Activated B cell treated with CpG ODN at 0.5 μM for 24 hours (primary cell): ENCODE measurements at regions of chr7 and their contacts with region 1.

Region 1: DNA sequence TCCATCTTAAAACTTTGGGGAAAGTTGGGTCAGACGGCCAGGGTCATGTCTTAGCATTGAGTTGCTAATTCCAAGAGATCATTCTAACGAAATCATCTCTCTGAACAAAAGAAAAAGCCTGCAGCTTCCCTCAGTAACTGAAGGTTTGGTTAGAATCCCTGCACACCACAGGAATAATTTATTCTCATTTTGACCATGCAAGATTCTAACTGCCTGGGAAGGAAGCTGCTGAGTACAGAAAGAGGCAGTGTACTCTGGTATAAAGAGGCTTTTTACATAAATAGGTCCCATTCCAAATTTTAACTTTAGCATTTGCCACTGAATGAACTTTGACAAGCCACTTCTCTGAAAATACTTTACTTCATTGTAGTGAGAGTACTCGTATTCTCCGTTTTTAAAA is 76.9 kb upstream of the RSBN1L start:
- DNase-seq: no peak
- ATAC-seq: no peak
- H3K4me3 Mint-ChIP-seq: no peak overlapping the region
- H3K27ac Mint-ChIP-seq: no peak overlapping the region
- H3K4me1 Mint-ChIP-seq: no peaks in the 10 kb centered on the region
- H3K27me3 Mint-ChIP-seq: no peaks in the 10 kb centered on the region
- CTCF ChIP-seq: no peak

Region 2: DNA sequence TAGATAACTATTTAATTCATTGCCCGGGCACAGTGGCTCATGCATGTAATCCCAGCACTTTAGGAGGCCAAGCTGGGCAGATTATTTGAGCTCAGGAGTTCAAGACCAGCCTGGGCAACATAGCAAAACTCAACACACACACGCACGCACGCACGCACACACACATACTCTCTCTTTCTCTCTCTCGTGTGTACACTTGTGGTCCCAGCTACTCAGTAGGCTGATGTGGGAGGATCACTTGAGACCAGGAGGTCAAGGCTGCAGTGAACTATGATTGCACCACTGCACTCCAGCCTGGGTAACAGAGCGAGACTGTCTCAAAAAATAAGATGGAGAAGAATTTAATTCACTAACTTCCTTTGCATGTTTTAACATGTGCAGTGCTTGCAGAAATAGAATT is 44.1 kb before region 1 on chr7:
- CTCF ChIA-PET with region 1: no interaction called
- POLR2A ChIA-PET with region 1: no interaction called
- intact Hi-C with region 1: loop called (anchors 5 kb)
- DNase-seq: no peak
- ATAC-seq: no peak
- H3K4me3 Mint-ChIP-seq: no peak overlapping the region
- H3K27ac Mint-ChIP-seq: no peak overlapping the region
- H3K4me1 Mint-ChIP-seq: peaks cover 3% of the 10 kb centered on the region
- H3K27me3 Mint-ChIP-seq: no peaks in the 10 kb centered on the region
- CTCF ChIP-seq: no peak